ENCODE measurements at regions of chr11 and their contacts with region 1.

Region 1: DNA sequence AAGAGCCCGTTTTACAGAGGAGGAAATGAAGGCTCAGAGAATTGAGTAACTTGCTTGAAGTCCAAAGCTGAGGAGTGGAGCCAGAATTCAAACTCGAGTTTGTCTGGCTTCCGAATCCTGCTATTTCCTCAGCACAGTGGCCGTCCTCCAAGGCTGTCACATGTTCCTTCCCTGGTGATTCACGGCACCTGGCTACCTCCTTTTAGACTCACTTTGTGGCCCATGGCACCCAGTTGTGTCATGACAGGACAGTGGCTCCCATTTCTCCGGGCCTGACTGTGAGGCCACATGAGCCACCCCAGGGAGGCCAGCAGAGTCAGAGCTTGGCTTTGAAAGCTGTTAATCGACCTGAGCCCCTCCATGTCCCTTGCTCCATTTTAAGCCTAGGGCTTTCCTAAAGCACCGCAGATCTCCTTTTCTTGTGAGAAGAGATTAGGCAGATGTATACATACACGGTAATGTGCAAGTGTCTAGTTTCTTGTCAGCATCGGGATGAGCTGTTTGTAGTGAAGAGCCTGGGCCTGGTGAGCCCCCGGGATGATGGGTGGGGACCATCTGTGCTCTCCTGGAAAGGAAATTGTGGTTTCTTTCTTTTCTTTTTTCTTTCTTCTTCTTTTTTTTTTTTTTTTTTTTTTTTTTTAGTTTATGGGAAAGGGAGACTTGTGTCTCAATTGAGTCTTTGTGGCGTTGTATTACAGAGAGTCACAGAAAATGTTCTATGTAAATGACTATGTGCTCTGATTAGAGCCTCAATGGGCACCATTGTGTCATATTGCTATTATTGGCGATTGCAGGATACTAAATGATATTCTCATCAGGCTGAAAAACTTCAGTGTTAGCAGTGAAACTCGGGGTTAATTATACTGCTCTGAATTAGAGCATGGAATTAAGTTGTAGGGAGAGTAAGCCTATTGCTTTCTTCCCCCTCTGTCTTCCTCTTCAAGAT is 54.8 kb downstream of the PTPRJ start:
- H3K4me3 Mint-ChIP-seq: peak overlapping the region; percentile 13
- H3K27ac Mint-ChIP-seq: peak overlapping the region; percentile 78
- H3K4me1 Mint-ChIP-seq: peaks cover 81% of the 10 kb centered on the region
- H3K27me3 Mint-ChIP-seq: no peaks in the 10 kb centered on the region

Region 2: GRCh38 chr11:47980245-47981049 is 54.8 kb before region 1 on chr11 and contains the start of gene PTPRJ:
- intact Hi-C with region 1: loop called (anchors 5 kb)
- H3K4me3 Mint-ChIP-seq: peak within 1 kb of the TSS; percentile 83
- H3K27ac Mint-ChIP-seq: peak within 1 kb of the TSS; percentile 86
- H3K4me1 Mint-ChIP-seq: peaks cover 28% of the 10 kb centered on the region
- H3K27me3 Mint-ChIP-seq: peaks cover 8% of the 10 kb centered on the region

Region 3: DNA sequence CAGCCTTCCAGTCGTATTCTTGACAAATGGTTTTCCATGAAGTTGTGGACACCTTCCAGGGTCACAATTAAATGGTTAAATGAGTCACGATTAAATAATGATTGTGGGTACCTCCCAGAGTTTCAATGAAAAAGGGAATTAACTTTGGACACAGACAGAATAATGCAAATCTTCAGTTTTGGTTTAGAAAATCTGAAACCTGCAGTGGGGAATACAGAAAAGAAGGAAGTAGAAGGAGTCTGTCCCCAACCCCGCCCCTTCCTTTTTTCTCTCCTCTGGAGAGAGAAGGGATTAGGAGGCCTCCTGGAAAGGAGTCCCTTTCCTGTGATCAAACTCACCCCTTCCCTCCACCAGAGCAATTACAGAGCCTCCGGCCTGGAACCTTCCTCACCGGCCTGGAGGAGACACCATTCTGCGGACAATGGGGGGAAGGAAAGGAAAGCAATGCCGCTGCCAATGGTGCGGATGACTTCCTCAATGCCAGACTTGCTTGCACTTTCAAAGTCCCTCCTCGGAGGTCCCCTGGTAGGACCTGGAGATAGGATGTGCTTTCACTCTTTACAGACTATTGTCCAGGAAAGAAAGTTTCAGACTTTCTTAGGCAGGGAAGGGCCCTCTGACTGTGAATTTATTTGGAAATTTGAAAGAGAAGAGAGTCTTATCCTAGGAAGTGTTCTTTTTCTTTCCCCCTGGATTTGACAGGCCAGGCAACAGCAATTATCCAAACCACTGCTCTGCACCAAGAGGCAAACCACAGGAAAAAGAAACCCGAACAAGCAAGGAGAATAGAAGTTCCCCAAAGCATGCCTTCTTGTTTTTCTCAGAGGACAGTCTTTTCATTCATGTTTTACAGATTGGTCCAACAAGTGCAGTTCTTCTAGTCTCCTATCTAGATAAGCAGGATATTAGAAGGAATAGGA is 31.9 kb after region 1 on chr11:
- intact Hi-C with region 1: loop called (anchors 5 kb)
- H3K4me3 Mint-ChIP-seq: peak overlapping the region; percentile 49
- H3K27ac Mint-ChIP-seq: peak overlapping the region; percentile 80
- H3K4me1 Mint-ChIP-seq: peaks cover 66% of the 10 kb centered on the region
- H3K27me3 Mint-ChIP-seq: no peaks in the 10 kb centered on the region

Measured in dendritic cell treated with granulocyte-macrophage colony-stimulating factor and Interleukin-4, amounts not matched to agents 40 ng/mL and 50 ng/mL, for 4 days (primary cell).